ENCODE measurements at regions of chr7 and their contacts with region 1.

Region 1: DNA sequence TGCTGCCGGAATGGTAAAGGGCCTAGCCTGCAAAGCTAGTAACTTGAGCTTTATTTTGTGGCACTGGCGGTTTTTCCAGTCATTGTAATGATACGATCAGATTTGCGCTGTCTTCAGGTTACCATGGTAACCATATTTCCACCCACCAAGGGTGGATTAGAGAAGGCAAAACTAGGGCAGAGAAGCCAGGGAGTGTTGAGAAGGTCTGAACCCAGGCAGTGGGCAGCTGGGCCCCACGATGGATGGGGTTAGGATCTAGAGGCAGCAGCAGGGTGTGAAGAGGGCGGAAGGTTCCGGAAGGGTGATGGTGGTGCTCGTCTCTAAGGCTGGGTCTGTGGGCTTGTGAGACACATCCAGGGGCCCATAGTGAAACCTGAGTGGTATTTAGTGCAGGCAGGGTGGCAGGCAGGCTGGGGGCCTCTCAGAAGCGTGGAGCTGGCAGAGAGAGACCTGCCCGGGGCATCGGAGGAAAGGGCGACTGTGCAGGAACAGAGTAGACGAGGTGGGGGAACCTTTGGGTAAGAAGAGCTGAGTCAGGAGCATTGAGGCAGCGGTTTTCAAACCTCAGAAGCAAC is 87.9 kb upstream of the GTF2I start:
- DNase-seq: no peak
- CTCF ChIP-seq: no peak

Region 2: DNA sequence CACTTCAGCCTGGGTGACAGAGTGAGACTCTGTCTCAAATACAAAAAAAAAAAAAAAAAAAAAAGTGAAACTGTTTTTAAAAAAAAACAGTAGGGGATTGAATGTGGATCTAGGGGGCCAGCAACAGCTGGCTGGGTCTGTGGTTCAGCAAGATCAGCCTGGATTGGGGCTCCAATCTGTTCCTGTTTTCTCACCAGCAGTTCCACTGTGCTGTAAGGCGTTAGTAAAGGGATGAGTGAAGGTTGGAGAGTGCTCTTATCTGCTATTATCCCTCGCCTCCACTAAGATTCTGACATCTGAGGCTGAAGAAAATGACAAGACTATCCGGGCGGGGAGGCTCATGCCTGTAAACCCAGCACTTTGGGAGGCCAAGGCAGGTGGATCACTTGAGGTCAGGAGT is 157.5 kb before region 1 on chr7:
- CTCF ChIA-PET with region 1: interaction called, 29 read pairs
- POLR2A ChIA-PET with region 1: no interaction called
- DNase-seq: no peak
- CTCF ChIP-seq: no peak

Region 3: DNA sequence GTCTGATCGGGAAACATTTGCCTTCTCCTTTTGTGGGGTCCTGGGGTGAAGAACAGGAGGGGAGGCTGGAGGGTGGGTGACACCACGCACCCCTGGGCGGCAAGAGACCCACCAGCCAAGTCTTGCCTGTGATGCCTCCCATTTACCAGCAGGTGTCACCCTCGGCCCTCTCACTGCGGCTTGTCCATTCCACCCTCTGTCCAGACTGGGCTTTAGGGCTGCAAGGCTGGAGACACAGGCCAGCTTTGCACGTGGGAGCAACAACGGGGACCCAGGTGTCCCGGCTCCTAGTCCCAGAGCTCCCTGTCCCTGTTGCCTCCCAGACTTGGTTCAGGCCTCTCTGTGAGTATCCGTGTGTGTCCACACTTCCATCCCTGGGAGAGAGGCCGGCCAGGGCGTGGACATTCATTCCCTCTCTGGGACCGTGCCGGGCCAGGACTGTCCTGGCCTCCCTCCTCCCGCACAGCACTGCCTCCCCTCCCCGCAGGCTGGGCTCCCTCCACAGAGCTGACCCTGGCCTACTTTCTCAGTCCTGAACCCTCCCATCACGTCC is 152.1 kb before region 1 on chr7:
- CTCF ChIA-PET with region 1: interaction called, 29 read pairs
- POLR2A ChIA-PET with region 1: no interaction called
- DNase-seq: peak; percentile 92
- CTCF ChIP-seq: peak; percentile 93

Region 4: GRCh38 chr7:74449809-74450397 is 119.7 kb before region 1 on chr7:
- CTCF ChIA-PET with region 1: interaction called, 31 read pairs
- POLR2A ChIA-PET with region 1: no interaction called
- DNase-seq: peak; percentile 84
- CTCF ChIP-seq: peak; percentile 67

Region 5: DNA sequence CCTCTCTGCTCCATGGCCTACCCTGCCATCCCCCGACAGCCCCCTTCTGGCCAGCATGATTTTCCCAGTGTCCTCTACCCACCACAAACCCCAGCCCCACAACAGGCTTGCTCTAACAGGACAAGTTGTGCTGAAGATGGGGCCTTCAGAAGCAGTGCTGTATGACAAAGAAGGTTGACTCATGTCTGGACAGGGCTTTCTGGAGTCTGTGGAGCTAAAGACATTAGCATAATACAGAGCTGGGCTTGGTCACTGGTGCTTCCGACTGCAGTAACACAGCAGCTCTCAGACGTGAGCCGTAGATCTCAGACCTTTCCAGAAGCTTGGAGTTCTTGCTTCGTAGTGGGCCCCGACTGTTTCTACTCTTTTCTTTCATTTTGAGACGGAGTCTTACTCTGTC is 15.4 kb before region 1 on chr7:
- CTCF ChIA-PET with region 1: interaction called, 12 read pairs
- POLR2A ChIA-PET with region 1: no interaction called
- DNase-seq: no peak
- CTCF ChIP-seq: no peak

Region 6: DNA sequence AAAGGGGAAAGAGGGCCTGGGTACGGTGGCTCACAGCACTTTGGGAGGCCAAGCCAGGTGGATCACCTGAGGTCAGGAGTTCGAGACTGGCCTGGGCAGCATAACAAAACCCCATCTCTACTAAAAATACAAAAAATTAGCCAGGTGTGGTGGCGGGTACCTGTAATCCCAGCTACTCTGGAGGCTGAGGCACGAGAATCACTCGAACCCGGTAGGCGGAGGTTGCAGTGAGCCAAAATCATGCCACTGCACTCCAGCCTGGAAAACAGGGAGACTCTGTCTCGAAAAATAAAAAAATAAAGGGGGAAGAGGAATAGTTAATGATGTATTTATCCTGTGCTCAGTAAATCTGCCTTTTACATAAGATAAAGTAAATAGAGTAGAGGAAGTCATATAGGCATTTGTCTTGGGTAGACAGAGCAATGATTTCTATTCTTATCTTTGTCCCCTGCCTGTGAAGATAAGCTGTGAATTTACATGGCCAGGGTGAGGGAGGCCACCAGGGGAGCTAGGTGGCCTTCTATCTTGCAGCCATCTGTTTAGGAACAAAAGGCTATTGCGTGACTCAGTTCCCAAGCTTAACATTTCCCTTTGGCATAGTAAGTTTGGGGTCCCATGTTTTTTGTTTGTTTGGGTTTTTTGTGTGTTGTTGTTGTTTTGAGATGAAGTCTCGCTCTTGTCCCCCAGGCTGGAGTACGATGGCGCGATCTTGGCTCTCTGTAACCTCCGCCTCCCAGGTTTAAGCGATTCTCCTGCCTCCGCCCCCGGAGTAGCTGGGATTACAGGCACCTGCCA is 14.8 kb after region 1 on chr7:
- CTCF ChIA-PET with region 1: interaction called, 30 read pairs
- POLR2A ChIA-PET with region 1: no interaction called
- DNase-seq: no peak
- CTCF ChIP-seq: no peak

Region 7: DNA sequence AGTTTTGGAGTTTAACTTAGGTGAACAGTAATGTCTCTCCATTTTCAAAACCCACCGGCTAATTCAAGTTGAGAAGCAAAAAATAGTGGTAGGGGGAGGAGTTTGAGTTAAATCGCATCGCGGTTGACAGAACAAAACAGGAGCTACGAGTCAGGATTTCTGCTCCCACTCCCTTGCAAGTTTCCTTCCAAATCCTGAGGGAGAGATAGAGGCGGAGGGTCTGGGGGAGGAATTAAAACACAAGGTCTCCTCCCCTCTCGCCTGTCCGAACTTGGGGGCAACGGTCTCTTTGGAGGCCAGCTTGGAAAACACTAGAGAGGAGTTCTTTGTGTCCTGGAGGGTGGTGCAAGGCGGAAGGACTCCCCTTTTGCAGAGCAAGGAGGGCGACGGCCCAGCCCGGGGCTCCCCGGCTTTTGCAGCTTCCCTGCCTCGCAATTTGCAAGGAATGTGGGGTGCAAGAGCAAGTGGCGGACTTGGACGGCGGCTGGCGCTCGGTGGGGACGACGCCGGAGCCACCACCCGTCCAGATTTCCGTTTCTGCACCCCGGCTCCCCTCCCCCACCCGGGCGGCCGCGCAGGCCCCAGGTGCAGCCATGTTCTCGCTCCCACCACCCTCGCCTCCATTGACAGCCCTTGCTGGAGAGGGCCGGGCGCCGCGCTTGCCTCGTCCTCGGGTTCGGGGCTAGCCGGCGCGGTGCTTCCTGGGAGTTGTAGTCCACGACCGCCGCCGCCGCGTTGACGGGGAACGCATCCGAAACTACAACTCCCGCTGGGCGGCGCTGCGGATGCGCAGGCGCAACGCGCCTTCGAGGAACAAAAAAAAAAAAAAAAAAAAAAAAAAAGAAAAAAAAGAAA is 87.5 kb after region 1 on chr7:
- CTCF ChIA-PET with region 1: no interaction called
- POLR2A ChIA-PET with region 1: no interaction called
- DNase-seq: peak; percentile 93
- CTCF ChIP-seq: no peak

Measured in GM10248 (cell line).